B cell (primary cell): ENCODE measurements at regions of chr2 and their contacts with region 1.

Region 1: DNA sequence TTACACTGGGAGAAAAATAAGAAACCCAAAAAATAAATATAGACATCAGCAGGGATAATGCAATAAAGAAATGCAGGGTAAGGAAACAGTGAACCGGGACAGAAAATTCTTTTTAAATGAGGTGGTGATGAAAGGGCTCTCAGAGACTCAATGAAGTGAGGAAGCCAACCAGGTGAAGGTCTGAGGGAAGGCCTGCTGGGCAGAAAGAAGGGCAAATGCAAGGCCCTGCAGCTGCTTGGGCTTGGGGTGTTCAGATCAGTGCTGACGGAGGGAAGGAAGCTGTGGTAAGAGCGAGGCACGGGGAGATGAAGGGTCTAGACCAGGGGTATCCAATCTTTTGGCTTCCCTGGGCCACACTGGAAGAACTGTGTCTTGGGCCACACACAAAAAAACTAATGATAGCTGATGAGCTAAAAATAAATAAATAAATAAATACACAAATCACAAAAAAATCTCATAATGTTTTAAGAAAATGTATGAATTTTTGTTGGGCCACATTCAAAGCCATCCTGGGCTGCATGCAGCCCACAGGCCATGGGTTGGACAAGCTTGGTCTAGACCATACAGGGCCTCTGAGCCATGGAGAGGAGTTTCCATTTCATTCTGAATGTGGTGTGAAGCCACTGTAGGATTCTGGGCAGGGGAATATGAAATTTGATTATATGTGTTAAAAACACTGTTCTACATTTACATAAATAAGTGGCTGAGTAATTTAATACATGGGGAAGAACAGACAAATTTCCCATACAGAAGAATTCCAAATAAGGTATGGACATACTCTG is 96.3 kb upstream of the DNMT3A start:
- DNase-seq: no peak
- ATAC-seq: no peak
- H3K4me3 ChIP-seq: no peak overlapping the region
- H3K4me3 Mint-ChIP-seq: no peak overlapping the region
- H3K27ac ChIP-seq: no peak overlapping the region
- H3K27ac Mint-ChIP-seq: no peak overlapping the region
- H3K4me1 ChIP-seq: no peaks in the 10 kb centered on the region
- H3K4me1 Mint-ChIP-seq: peaks cover 11% of the 10 kb centered on the region
- H3K27me3 ChIP-seq: no peaks in the 10 kb centered on the region
- H3K27me3 Mint-ChIP-seq: no peaks in the 10 kb centered on the region
- CTCF ChIP-seq: no peak

Region 2: DNA sequence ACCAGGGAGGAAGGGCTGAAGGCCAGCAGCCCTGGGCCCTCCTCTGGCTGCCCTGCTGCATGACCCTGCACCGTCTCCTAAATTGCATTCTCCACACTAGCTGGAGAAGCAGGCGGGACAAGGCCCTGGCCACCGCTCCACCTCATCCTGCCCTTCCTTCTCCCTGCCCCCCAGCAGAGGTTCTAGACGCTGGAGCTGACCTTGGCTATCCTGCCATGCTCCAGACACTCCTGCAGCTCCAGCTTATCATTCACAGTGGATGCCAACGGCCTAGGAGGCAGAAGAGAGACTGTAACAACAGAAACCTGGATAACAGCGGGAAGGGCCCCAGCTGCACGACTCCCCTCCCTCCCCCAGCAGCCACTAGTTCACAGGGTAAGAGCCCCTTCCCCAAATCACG is 201.3 kb before region 1 on chr2:
- CTCF ChIA-PET with region 1: no interaction called
- POLR2A ChIA-PET with region 1: no interaction called
- intact Hi-C with region 1: no loop called
- DNase-seq: no peak
- ATAC-seq: no peak
- H3K4me3 ChIP-seq: no peak overlapping the region
- H3K4me3 Mint-ChIP-seq: no peak overlapping the region
- H3K27ac ChIP-seq: no peak overlapping the region
- H3K27ac Mint-ChIP-seq: no peak overlapping the region
- H3K4me1 ChIP-seq: no peaks in the 10 kb centered on the region
- H3K4me1 Mint-ChIP-seq: no peaks in the 10 kb centered on the region
- H3K27me3 ChIP-seq: no peaks in the 10 kb centered on the region
- H3K27me3 Mint-ChIP-seq: no peaks in the 10 kb centered on the region
- CTCF ChIP-seq: no peak

Region 3: GRCh38 chr2:25371253-25372241 is 66.5 kb before region 1 on chr2:
- CTCF ChIA-PET with region 1: no interaction called
- POLR2A ChIA-PET with region 1: interaction called, 16 read pairs
- intact Hi-C with region 1: no loop called
- DNase-seq: peak; percentile 4
- ATAC-seq: no peak
- H3K4me3 ChIP-seq: no peak overlapping the region
- H3K4me3 Mint-ChIP-seq: no peak overlapping the region
- H3K27ac ChIP-seq: no peak overlapping the region
- H3K27ac Mint-ChIP-seq: no peak overlapping the region
- H3K4me1 ChIP-seq: peaks cover 7 to 11% of the 10 kb centered on the region in 2 donors
- H3K4me1 Mint-ChIP-seq: peaks cover 9% of the 10 kb centered on the region
- H3K27me3 ChIP-seq: no peaks in the 10 kb centered on the region
- H3K27me3 Mint-ChIP-seq: no peaks in the 10 kb centered on the region
- CTCF ChIP-seq: no peak